ENCODE measurements at regions of chr10 and their contacts with region 1.

Region 1: DNA sequence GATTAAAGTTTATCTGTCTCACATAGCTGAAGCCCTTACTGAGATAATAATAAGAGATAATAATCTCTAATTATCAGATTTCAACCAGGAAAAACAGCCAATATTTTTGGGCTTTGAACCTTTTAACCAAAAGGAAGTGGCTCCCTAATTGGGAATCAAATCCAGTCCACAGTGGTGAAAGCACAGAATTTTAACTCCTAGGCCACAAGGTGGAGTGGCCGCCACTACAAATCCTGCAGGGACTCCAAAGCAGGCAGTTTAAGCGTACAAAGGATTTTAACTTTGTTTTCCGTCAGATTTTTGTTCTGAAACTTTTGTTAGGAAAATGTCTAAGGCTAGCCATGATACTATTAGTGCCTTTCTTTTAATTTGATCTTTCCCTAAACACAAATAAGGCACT is 99.6 kb upstream of the CCNY start:
- DNase-seq: peak in 1 of 2 experiments; percentile 50
- H3K4me3 ChIP-seq: no peak overlapping the region
- H3K4me3 Mint-ChIP-seq: no peak overlapping the region
- H3K27ac Mint-ChIP-seq: no peak overlapping the region
- H3K4me1 ChIP-seq: no peaks in the 10 kb centered on the region
- H3K4me1 Mint-ChIP-seq: peaks cover 4% of the 10 kb centered on the region
- H3K27me3 ChIP-seq: no peaks in the 10 kb centered on the region
- H3K27me3 Mint-ChIP-seq: no peaks in the 10 kb centered on the region
- CTCF ChIP-seq: peak; percentile 54 to 68

Region 2: GRCh38 chr10:35271086-35271858 is 34.5 kb after region 1 on chr10:
- CTCF ChIA-PET with region 1: no interaction called
- POLR2A ChIA-PET with region 1: no interaction called
- intact Hi-C with region 1: no loop called
- DNase-seq: no peak
- H3K4me3 ChIP-seq: no peak overlapping the region
- H3K4me3 Mint-ChIP-seq: no peak overlapping the region
- H3K27ac Mint-ChIP-seq: no peak overlapping the region
- H3K4me1 ChIP-seq: peaks cover 21% of the 10 kb centered on the region
- H3K4me1 Mint-ChIP-seq: peaks cover 8% of the 10 kb centered on the region
- H3K27me3 ChIP-seq: no peaks in the 10 kb centered on the region
- H3K27me3 Mint-ChIP-seq: no peaks in the 10 kb centered on the region
- CTCF ChIP-seq: no peak

Region 3: DNA sequence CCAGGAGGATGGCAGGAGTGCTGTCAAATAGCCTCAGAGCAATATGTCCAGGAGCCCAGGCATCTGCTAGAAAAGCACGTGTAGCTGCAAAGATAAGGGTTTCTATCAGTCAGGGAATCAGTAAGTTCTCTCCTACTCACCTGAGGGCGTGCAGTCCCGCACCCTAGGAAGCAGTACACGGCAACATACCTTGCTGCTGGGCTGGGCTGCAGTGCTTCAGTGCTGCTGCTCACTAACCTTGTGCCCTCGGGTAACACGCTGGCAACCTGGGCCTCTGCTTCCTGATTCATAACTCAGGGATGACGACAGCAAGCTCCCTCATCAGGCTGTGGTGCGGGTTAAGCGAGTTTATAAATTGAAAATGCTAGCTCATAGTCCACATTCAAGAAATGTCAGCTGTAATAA is 70.1 kb after region 1 on chr10:
- CTCF ChIA-PET with region 1: interaction called, 4 read pairs
- POLR2A ChIA-PET with region 1: no interaction called
- intact Hi-C with region 1: loop called (anchors 2 kb)
- DNase-seq: peak; percentile 76 to 86
- H3K4me3 ChIP-seq: 0 out of 2 replicates have a peak overlapping the region, but pooled peaks have one; percentile 1
- H3K4me3 Mint-ChIP-seq: peak overlapping the region; percentile 34
- H3K27ac Mint-ChIP-seq: peak overlapping the region; percentile 46
- H3K4me1 ChIP-seq: peaks cover 12% of the 10 kb centered on the region
- H3K4me1 Mint-ChIP-seq: peaks cover 13% of the 10 kb centered on the region
- H3K27me3 ChIP-seq: no peaks in the 10 kb centered on the region
- H3K27me3 Mint-ChIP-seq: no peaks in the 10 kb centered on the region
- CTCF ChIP-seq: no peak

Region 4: DNA sequence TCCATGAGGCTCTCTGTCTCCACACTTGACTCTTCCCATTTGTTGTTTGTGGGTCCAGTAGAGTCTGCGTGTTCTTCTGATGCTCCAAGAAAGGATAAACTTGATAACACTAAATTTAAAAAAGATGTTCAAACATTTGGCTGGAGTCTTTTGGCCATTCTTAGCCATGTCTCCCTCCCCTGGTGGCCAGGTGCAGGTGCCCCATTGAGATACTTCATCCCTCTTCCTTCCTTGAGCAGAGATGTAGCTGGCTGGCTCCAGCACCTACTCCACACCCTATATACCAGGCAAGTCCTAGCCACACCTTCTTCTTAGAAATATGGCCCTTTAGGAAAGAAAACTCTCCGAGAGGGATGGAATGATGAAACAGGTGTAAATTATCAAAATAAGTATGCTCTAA is 265.2 kb after region 1 on chr10:
- CTCF ChIA-PET with region 1: interaction called, 5 read pairs
- POLR2A ChIA-PET with region 1: no interaction called
- intact Hi-C with region 1: loop called (anchors 1 kb)
- DNase-seq: peak in 1 of 2 experiments; percentile 21
- H3K4me3 ChIP-seq: no peak overlapping the region
- H3K4me3 Mint-ChIP-seq: no peak overlapping the region
- H3K27ac Mint-ChIP-seq: no peak overlapping the region
- H3K4me1 ChIP-seq: peaks cover 13% of the 10 kb centered on the region
- H3K4me1 Mint-ChIP-seq: peaks cover 37% of the 10 kb centered on the region
- H3K27me3 ChIP-seq: no peaks in the 10 kb centered on the region
- H3K27me3 Mint-ChIP-seq: no peaks in the 10 kb centered on the region
- CTCF ChIP-seq: peak; percentile 26 to 45

Region 5: GRCh38 chr10:35563261-35563891 is 326.6 kb after region 1 on chr10:
- CTCF ChIA-PET with region 1: interaction called, 5 read pairs
- POLR2A ChIA-PET with region 1: no interaction called
- intact Hi-C with region 1: loop called (anchors 2 kb)
- DNase-seq: peak; percentile 65 to 77
- H3K4me3 ChIP-seq: no peak overlapping the region
- H3K4me3 Mint-ChIP-seq: no peak overlapping the region
- H3K27ac Mint-ChIP-seq: no peak overlapping the region
- H3K4me1 ChIP-seq: no peaks in the 10 kb centered on the region
- H3K4me1 Mint-ChIP-seq: no peaks in the 10 kb centered on the region
- H3K27me3 ChIP-seq: no peaks in the 10 kb centered on the region
- H3K27me3 Mint-ChIP-seq: no peaks in the 10 kb centered on the region
- CTCF ChIP-seq: peak; percentile 99

Region 6: GRCh38 chr10:35598384-35598783 is 361.6 kb after region 1 on chr10:
- CTCF ChIA-PET with region 1: interaction called, 5 read pairs
- POLR2A ChIA-PET with region 1: no interaction called
- intact Hi-C with region 1: loop called (anchors 2 kb)
- DNase-seq: peak; percentile 41 to 48
- H3K4me3 ChIP-seq: no peak overlapping the region
- H3K4me3 Mint-ChIP-seq: no peak overlapping the region
- H3K27ac Mint-ChIP-seq: no peak overlapping the region
- H3K4me1 ChIP-seq: no peaks in the 10 kb centered on the region
- H3K4me1 Mint-ChIP-seq: no peaks in the 10 kb centered on the region
- H3K27me3 ChIP-seq: no peaks in the 10 kb centered on the region
- H3K27me3 Mint-ChIP-seq: no peaks in the 10 kb centered on the region
- CTCF ChIP-seq: peak; percentile 55 to 84

Measured in Caco-2 (cell line).